PC-3 (cell line): ENCODE measurements at regions of chr5 and their contacts with region 1.

Region 1: DNA sequence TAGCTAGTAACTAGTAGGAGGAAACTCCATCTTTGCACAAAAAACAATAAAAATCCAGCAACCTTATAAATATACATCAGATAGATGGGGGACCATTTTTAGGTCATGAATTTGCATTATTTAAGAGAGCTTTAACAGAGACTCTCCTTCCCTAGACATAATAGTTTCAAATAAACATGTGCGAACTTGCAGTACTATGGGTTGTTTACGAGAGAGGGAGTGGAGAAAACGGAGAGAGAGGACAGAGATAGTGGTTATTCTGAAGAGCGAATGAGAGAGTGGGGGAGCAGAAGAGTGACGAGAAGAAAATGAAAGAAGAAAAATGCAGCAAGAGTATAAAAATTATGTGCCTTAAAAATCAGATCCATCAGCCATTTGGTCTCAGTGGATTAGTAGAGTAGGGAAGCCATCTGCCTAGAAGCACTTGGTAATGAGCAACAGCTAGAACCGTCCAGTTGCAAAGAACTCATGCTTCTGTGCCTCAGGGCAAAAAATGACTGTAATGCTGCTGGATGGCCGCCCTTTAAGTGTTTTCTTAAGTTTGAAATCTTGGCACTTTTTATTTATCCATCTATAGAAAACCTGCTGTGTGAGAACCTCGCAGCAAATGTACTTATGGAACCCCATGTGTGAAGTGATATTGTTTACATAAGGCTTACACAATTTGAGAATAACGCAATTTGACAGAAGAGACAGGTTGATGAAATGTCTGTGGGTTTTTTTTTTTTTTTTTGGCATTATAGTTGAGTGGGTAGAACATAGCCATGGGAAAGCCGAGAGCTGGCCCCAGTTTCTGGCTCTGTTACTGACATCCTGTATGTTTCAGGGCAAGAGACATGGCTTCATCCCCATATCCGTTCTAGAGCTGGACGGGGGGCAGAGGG is 95.6 kb upstream of the ZNF608 start:
- DNase-seq: no peak
- ATAC-seq: no peak
- H3K4me3 ChIP-seq: no peak overlapping the region
- H3K27ac ChIP-seq: no peak overlapping the region
- H3K4me1 ChIP-seq: no peaks in the 10 kb centered on the region
- H3K27me3 ChIP-seq: no peaks in the 10 kb centered on the region
- CTCF ChIP-seq: no peak

Region 2: DNA sequence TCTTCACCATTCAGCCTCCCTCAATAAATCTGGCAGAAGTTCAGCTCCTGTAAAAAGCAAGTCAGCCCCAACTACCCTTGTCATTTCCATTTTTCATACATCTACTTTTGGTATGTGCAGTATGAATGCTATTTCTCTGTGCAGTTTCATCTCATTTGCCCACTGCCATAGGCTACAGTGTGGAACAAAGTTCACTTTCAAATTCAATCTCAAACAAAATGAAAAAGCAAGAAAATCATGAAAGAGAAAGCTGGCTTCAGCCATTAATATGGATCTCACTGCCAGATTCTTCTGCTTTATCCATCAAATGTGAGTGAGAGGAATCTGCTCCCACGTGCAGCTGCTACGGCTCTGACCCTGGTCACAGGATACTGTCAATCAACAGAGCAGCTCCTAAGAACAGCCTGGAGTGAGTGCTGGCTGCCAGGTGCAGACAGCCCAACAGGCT is 589.9 kb before region 1 on chr5:
- CTCF ChIA-PET with region 1: no interaction called
- POLR2A ChIA-PET with region 1: interaction called, 14 read pairs
- intact Hi-C with region 1: no loop called
- DNase-seq: no peak
- ATAC-seq: no peak
- H3K4me3 ChIP-seq: no peak overlapping the region
- H3K27ac ChIP-seq: no peak overlapping the region
- H3K4me1 ChIP-seq: no peaks in the 10 kb centered on the region
- H3K27me3 ChIP-seq: no peaks in the 10 kb centered on the region
- CTCF ChIP-seq: no peak

Region 3: DNA sequence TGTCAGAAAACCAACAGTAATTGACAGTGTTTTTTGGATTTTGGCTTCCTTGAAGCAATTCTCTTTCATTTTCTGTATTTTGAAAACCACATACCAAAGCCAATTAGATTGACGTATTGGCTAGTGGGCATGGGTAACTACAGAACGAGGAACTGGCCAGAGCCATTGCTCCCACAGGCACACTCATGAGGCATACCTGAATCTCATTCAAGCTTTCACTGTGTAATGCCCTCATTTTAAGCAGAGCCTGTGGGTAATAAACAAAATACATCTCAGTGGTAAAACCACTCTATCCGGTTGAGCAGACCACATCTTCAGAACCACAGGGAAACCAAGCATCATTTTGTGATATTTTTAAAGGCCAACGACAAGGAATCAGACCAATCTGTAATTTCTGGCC is 489.8 kb before region 1 on chr5:
- CTCF ChIA-PET with region 1: no interaction called
- POLR2A ChIA-PET with region 1: no interaction called
- intact Hi-C with region 1: no loop called
- DNase-seq: no peak
- ATAC-seq: no peak
- H3K4me3 ChIP-seq: no peak overlapping the region
- H3K27ac ChIP-seq: no peak overlapping the region
- H3K4me1 ChIP-seq: no peaks in the 10 kb centered on the region
- H3K27me3 ChIP-seq: no peaks in the 10 kb centered on the region
- CTCF ChIP-seq: no peak

Region 4: GRCh38 chr5:124812754-124813358 is 29.2 kb before region 1 on chr5:
- CTCF ChIA-PET with region 1: no interaction called
- POLR2A ChIA-PET with region 1: no interaction called
- intact Hi-C with region 1: no loop called
- DNase-seq: peak; percentile 44
- ATAC-seq: no peak
- H3K4me3 ChIP-seq: no peak overlapping the region
- H3K27ac ChIP-seq: no peak overlapping the region
- H3K4me1 ChIP-seq: 0 out of 2 replicates have a peak, but pooled peaks cover 4% of the 10 kb centered on the region
- H3K27me3 ChIP-seq: no peaks in the 10 kb centered on the region
- CTCF ChIP-seq: no peak